Head of caudate nucleus (tissue), 42 donors: ENCODE measurements at regions of chr12 and their contacts with region 1.

Region 1: DNA sequence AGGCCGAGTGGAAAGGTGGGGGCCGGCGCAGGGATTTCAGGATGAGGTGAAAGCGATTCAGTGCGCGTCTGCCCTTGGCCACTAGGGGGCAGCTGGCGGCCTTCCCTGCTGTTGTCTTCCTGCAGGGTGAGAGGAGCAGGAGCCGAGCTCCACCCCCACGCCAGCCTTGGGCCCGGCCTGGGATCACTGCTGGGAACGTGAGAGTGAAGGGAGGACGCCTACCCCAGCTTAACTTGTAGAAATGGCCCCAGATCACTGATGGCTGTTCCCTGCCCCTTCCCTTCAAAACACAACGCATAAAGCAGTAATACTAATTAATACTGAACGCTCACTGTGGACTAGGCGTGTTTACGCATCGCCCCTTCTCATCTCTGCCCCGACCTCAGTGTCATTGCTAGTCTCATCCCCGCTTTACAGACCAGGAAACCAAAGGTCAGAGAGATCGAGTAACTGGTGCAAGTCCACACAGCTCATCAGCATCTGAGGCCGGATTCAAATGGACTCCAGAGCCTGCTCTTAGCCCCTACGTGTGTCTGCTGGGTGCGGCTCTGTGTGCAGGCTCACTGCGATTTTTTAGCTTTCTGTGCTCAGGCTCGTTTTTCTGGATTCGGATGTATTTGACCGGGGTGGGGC is 24.3 kb downstream of the MVK start:
- DNase-seq: peak; percentile 85 to 97 (median 93)

Region 2: GRCh38 chr12:109713187-109713984 is 115.5 kb after region 1 on chr12 and contains the start of gene FAM222A:
- intact Hi-C with region 1: loop called (anchors 10 kb)
- DNase-seq: peak; percentile 94 to 100 (median 99)